Left colon (tissue), 2 donors: ENCODE measurements at regions of chr12 and their contacts with region 1.

Region 1: DNA sequence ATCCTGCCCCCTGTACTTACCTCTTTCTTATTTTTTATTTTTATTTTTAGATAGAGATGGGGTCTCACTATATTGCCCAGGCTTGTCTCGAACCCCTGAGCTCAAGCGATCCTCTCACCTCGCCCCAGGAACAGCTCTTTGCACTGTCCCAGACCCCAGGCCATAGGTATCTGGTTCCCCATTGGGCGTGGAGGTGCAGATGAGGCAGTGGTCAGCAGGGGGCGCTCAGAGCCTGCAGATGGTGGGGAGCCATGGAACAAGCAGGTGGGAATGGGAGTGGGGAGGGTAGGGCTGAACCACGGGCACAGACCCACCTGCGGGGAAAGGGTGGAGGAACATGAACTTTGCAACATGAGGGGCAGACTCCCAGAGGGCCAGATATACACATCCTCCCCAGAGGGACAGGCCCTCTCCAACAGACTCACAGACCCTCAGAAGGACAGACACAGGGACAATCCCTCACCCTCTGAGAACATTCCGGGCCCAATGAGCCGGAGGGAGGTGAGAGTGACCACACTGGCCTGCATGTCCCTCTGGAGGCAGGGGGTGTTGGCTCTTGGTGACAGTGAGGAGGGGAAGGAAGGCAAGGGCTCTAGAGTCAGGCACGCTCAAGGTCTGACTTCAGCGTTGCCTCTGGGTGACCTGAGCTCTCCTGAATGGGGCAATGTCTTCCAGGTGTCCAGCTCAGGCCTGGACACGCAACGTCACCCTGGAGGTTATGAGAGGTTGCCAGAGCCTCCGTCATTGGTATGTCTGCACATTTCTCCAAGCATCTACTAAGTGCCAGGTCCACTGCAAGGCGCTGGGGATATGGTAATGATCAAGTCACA is 34.9 kb downstream of the KRT80 start:
- DNase-seq: peak; percentile 62 to 82
- ATAC-seq: peak; percentile 51

Region 2: GRCh38 chr12:52082988-52083637 is 73.8 kb before region 1 on chr12:
- intact Hi-C with region 1: no loop called
- DNase-seq: peak in 1 of 2 donors; percentile 54
- ATAC-seq: peak; percentile 44

Region 3: GRCh38 chr12:52327052-52327829 is 170.3 kb after region 1 on chr12:
- intact Hi-C with region 1: loop called in 1 of 2 experiments (anchors 5 kb)
- DNase-seq: peak; percentile 78 to 82
- ATAC-seq: peak; percentile 99